Colonic mucosa (tissue), 4 donors: ENCODE measurements at regions of chr18 and their contacts with region 1.

Region 1: GRCh38 chr18:6543330-6543908 is 128.7 kb upstream of the L3MBTL4 start:
- DNase-seq: no peak
- H3K4me3 ChIP-seq: no peak overlapping the region
- H3K27ac ChIP-seq: no peak overlapping the region
- H3K4me1 ChIP-seq: no peaks in the 10 kb centered on the region
- H3K27me3 ChIP-seq: no peaks in the 10 kb centered on the region
- CTCF ChIP-seq: peak; percentile 26

Region 2: GRCh38 chr18:6414118-6414722 is 129.2 kb before region 1 on chr18:
- intact Hi-C with region 1: no loop called
- DNase-seq: peak; percentile 72
- H3K4me3 ChIP-seq: peak overlapping the region; percentile 57
- H3K27ac ChIP-seq: peak overlapping the region; percentile 48
- H3K4me1 ChIP-seq: no peaks in the 10 kb centered on the region
- H3K27me3 ChIP-seq: no peaks in the 10 kb centered on the region
- CTCF ChIP-seq: no peak

Region 3: GRCh38 chr18:6747646-6748045 is 204.2 kb after region 1 on chr18:
- intact Hi-C with region 1: no loop called
- DNase-seq: no peak
- H3K4me3 ChIP-seq: no peak overlapping the region
- H3K27ac ChIP-seq: no peak overlapping the region
- H3K4me1 ChIP-seq: no peaks in the 10 kb centered on the region
- H3K27me3 ChIP-seq: no peaks in the 10 kb centered on the region
- CTCF ChIP-seq: no peak

Region 4: DNA sequence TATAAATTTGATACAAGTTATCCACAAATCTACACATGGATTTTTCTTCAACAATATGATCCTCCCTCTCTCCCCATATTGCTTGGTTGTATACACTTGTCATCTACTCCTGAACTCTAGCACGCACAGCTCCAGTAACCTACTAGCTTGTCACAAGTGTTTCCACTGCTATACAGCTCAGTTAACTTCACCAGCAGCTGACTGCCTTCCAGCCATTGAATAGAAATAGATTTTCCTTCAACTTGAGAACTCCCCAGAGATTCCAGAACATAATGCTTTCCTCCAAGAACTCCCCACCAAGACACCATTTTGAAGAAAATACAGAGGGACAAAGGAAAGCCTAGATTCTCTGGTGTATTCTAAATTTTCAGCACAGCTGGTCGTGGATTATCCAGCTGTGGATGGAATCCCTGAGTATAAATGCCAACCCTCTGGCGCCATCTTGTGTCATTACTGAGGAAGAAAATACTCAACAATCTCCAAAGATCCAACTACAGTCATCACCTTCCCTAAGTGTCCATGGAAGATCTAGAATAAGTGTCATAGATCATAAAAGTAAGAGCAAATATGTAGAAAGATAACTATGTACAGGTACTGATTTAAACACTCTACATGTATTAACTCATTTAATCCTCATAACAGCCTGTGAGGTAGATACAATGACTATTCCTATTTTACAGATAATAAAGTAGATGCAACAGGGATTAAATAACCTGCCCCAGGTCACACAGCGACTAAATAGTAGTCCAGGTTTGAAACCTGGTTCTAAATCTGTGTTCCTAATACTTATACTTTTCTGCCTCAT is 342.8 kb after region 1 on chr18:
- intact Hi-C with region 1: loop called (anchors 2 kb)
- DNase-seq: peak; percentile 59
- H3K4me3 ChIP-seq: no peak overlapping the region
- H3K27ac ChIP-seq: no peak overlapping the region
- H3K4me1 ChIP-seq: no peaks in the 10 kb centered on the region
- H3K27me3 ChIP-seq: no peaks in the 10 kb centered on the region
- CTCF ChIP-seq: peak; percentile 50

Region 5: DNA sequence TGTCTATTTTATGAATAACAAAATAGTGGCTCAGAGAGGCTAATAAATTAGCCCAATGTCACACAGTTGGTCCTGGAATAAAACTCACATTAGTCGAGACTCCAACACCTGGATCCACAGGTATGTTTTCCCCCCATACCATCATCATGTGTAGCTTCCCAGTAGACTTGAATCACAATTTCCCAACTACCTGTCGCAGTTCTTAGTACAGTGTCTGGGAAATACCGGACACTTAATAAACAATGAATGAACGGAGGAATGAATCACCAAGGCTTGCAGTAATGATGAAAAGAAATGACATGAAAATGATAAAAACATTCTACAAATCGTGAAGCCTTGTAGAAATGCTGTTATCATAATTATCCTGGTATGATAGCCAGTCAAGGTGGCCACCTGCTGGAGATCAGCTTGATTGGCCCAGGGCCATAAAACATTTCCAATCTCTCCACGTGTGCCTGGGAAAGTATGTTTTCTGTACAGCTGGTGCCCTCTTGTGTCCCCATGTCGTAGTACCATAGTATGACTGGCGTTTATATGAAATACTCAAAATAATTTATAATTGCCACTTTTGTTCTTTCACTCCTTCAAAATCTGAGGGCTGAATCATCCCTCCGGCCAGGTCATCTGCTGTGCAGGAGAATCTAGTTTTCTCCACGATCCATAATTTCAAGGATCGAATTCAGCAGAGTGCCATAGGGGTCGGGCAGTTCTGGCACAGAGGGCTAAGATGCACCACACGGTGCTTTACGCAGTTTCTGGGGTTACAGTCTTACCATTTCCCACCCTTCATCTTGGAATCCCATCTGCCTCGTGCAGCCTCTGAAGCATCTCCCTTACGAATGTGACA is 478.8 kb after region 1 on chr18:
- intact Hi-C with region 1: loop called (anchors 10 kb)
- DNase-seq: peak; percentile 75
- H3K4me3 ChIP-seq: no peak overlapping the region
- H3K27ac ChIP-seq: no peak overlapping the region
- H3K4me1 ChIP-seq: no peaks in the 10 kb centered on the region
- H3K27me3 ChIP-seq: no peaks in the 10 kb centered on the region
- CTCF ChIP-seq: peak; percentile 77